Heart right ventricle (tissue), 16 donors: ENCODE measurements at regions of chrX and their contacts with region 1.

Region 1: GRCh38 chrX:8743126-8743732 is 11.3 kb upstream of the ANOS1 start:
- DNase-seq: peak; percentile 17 to 28
- ATAC-seq: no peak
- H3K4me3 ChIP-seq: no peak overlapping the region
- H3K27ac ChIP-seq: no peak overlapping the region
- H3K4me1 ChIP-seq: no peaks in the 10 kb centered on the region
- H3K27me3 ChIP-seq: peaks cover 0 to 7% (median 0%) of the 10 kb centered on the region in 7 donors
- CTCF ChIP-seq: peak in 8 of 9 donors; percentile 42 to 77 (median 58)

Region 2: GRCh38 chrX:7159132-7159861 is 1583.9 kb before region 1 on chrX:
- intact Hi-C with region 1: loop called in 1 of 10 experiments (anchors 10 kb)
- DNase-seq: no peak
- ATAC-seq: no peak
- H3K4me3 ChIP-seq: no peak overlapping the region
- H3K27ac ChIP-seq: no peak overlapping the region
- H3K4me1 ChIP-seq: no peaks in the 10 kb centered on the region
- H3K27me3 ChIP-seq: no peaks in the 10 kb centered on the region
- CTCF ChIP-seq: no peak

Region 3: GRCh38 chrX:7264399-7264798 is 1478.8 kb before region 1 on chrX:
- intact Hi-C with region 1: no loop called
- DNase-seq: no peak
- ATAC-seq: no peak
- H3K4me3 ChIP-seq: no peak overlapping the region
- H3K27ac ChIP-seq: no peak overlapping the region
- H3K4me1 ChIP-seq: peaks cover 0 to 4% (median 0%) of the 10 kb centered on the region in 9 donors
- H3K27me3 ChIP-seq: no peaks in the 10 kb centered on the region
- CTCF ChIP-seq: no peak

Region 4: GRCh38 chrX:7996414-7996813 is 746.8 kb before region 1 on chrX:
- intact Hi-C with region 1: loop called (anchors 2 to 10 kb)
- DNase-seq: peak in 1 of 2 donors; percentile 11
- ATAC-seq: no peak
- H3K4me3 ChIP-seq: no peak overlapping the region
- H3K27ac ChIP-seq: no peak overlapping the region
- H3K4me1 ChIP-seq: no peaks in the 10 kb centered on the region
- H3K27me3 ChIP-seq: no peaks in the 10 kb centered on the region
- CTCF ChIP-seq: peak; percentile 12 to 72 (median 61)

Region 5: DNA sequence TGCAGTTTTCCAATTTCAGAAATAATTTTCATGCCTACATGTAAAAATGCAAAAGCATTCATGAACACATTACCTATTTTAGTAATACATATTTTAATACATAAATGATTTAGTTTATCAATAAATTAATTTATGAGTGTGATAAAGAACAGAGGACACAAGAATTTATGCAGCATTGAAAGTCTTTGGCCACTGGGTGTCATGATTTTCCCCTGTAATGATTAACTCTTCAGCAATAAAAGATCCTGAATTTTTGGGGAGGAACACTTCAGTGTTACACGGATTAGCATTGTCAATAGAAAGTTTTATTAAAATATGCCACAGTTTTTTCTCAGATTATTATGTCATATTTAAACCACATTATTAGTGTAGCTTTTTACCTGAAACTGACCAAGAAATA is 563.6 kb before region 1 on chrX:
- intact Hi-C with region 1: loop called in 2 of 10 experiments (anchors 10 kb)
- DNase-seq: no peak
- ATAC-seq: no peak
- H3K4me3 ChIP-seq: no peak overlapping the region
- H3K27ac ChIP-seq: no peak overlapping the region
- H3K4me1 ChIP-seq: no peaks in the 10 kb centered on the region
- H3K27me3 ChIP-seq: no peaks in the 10 kb centered on the region
- CTCF ChIP-seq: peak in 6 of 9 donors; percentile 12 to 37 (median 34)

Region 6: GRCh38 chrX:8364369-8365141 is 378.7 kb before region 1 on chrX:
- intact Hi-C with region 1: loop called in 7 of 10 experiments (anchors 5 to 10 kb)
- DNase-seq: no peak
- ATAC-seq: no peak
- H3K4me3 ChIP-seq: no peak overlapping the region
- H3K27ac ChIP-seq: no peak overlapping the region
- H3K4me1 ChIP-seq: peaks cover 0 to 10% (median 0%) of the 10 kb centered on the region in 9 donors
- H3K27me3 ChIP-seq: no peaks in the 10 kb centered on the region
- CTCF ChIP-seq: peak in 8 of 9 donors; percentile 18 to 56 (median 42)

Region 7: GRCh38 chrX:8455557-8455956 is 287.7 kb before region 1 on chrX:
- intact Hi-C with region 1: loop called in 1 of 10 experiments (anchors 10 kb)
- DNase-seq: no peak
- ATAC-seq: no peak
- H3K4me3 ChIP-seq: no peak overlapping the region
- H3K27ac ChIP-seq: no peak overlapping the region
- H3K4me1 ChIP-seq: peaks cover 0 to 15% (median 7%) of the 10 kb centered on the region in 9 donors
- H3K27me3 ChIP-seq: no peaks in the 10 kb centered on the region
- CTCF ChIP-seq: no peak

Region 8: DNA sequence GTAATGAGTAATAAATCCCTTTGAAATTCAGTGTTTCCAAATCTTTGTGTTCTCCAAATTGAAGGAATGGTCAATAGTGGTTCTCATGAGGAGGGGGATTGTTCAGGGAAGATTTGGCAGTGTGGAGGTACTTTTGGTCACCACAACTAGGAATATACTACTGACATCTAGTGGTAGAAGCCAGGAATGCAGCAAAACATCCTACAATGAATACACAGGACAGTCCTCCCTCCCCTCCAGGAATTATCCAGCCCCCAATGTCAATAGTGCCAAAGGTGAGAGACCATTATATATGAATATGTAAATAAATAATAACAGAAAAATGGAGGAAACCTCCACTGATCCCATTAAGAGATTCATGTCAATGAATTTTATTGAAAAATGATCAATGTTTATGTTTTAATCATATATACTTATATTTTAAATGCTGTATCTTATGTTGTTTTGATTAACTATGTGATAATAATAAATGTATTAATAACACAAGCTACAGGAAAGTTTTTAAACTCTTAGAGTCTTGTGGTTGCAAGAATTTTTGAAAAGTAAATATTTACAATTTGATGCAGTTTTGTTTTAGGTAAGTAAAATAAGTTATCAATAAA is 72.3 kb after region 1 on chrX:
- intact Hi-C with region 1: loop called in 2 of 10 experiments (anchors 10 kb)
- DNase-seq: peak in 1 of 2 donors; percentile 13
- ATAC-seq: no peak
- H3K4me3 ChIP-seq: no peak overlapping the region
- H3K27ac ChIP-seq: no peak overlapping the region
- H3K4me1 ChIP-seq: no peaks in the 10 kb centered on the region
- H3K27me3 ChIP-seq: peaks cover 0 to 22% (median 0%) of the 10 kb centered on the region in 7 donors
- CTCF ChIP-seq: peak; percentile 15 to 81 (median 67)